ENCODE measurements at regions of chr19 and their contacts with region 1.

Region 1: GRCh38 chr19:13505761-13506470 is 363 bp downstream of the CACNA1A start:
- DNase-seq: no peak
- H3K4me3 ChIP-seq: peak overlapping the region in 1 of 3 experiments; percentile 20
- H3K27ac ChIP-seq: no peak overlapping the region
- H3K4me1 ChIP-seq: peaks cover 2% of the 10 kb centered on the region
- H3K27me3 ChIP-seq: peaks cover 27% of the 10 kb centered on the region
- CTCF ChIP-seq: no peak

Region 2: DNA sequence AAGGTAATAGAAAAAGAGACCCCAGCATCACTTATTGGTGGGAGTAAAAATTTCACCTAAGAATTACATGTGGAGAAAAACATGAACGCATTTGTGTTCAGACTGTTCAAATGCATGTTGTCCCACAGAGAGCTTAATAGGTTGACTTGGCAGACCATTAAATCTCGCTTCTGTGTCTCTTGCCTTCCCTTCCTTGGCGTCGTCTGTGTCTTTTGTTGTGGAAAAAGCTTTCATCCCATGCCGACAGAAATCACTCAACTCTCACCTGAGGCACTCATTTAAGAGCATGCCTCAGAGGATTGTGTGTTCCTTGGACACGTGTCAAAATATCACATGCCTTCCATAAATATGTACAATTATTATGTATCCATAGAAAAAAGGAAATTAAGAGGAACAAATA is 24.8 kb after region 1 on chr19:
- CTCF ChIA-PET with region 1: interaction called, 29 read pairs
- dilution Hi-C with region 1: no loop called
- in situ Hi-C with region 1: no loop called
- intact Hi-C with region 1: no loop called
- DNase-seq: no peak
- H3K4me3 ChIP-seq: no peak overlapping the region
- H3K27ac ChIP-seq: no peak overlapping the region
- H3K4me1 ChIP-seq: no peaks in the 10 kb centered on the region
- H3K27me3 ChIP-seq: no peaks in the 10 kb centered on the region
- CTCF ChIP-seq: no peak

Measured in mammary epithelial cell (primary cell).